ENCODE measurements at regions of chr16 and their contacts with region 1.

Region 1: GRCh38 chr16:69709456-69710084 is 16.8 kb downstream of the NQO1 start:
- DNase-seq: peak in 4 of 14 experiments; percentile 5 to 78 (median 76)
- ATAC-seq: peak; percentile 41
- H3K4me3 ChIP-seq: no peak overlapping the region
- H3K4me3 Mint-ChIP-seq: no peak overlapping the region
- H3K27ac ChIP-seq: no peak overlapping the region
- H3K27ac Mint-ChIP-seq: peak overlapping the region; percentile 10
- H3K4me1 ChIP-seq: no peaks in the 10 kb centered on the region
- H3K4me1 Mint-ChIP-seq: peaks cover 4% of the 10 kb centered on the region
- H3K27me3 ChIP-seq: no peaks in the 10 kb centered on the region
- H3K27me3 Mint-ChIP-seq: no peaks in the 10 kb centered on the region
- CTCF ChIP-seq: peak; percentile 76

Region 2: GRCh38 chr16:69691980-69692911 is 17.3 kb before region 1 on chr16:
- CTCF ChIA-PET with region 1: no interaction called
- POLR2A ChIA-PET with region 1: no interaction called
- intact Hi-C with region 1: no loop called
- DNase-seq: no peak
- ATAC-seq: no peak
- H3K4me3 ChIP-seq: no peak overlapping the region
- H3K4me3 Mint-ChIP-seq: no peak overlapping the region
- H3K27ac ChIP-seq: no peak overlapping the region
- H3K27ac Mint-ChIP-seq: no peak overlapping the region
- H3K4me1 ChIP-seq: no peaks in the 10 kb centered on the region
- H3K4me1 Mint-ChIP-seq: no peaks in the 10 kb centered on the region
- H3K27me3 ChIP-seq: no peaks in the 10 kb centered on the region
- H3K27me3 Mint-ChIP-seq: no peaks in the 10 kb centered on the region
- CTCF ChIP-seq: no peak

Region 3: GRCh38 chr16:69754469-69755310 is 45.1 kb after region 1 on chr16 and contains the start of gene NOB1:
- CTCF ChIA-PET with region 1: interaction called, 19 read pairs
- POLR2A ChIA-PET with region 1: interaction called, 22 read pairs
- intact Hi-C with region 1: loop called (anchors 1 kb)
- DNase-seq: peak; percentile 92 to 100 (median 97)
- ATAC-seq: peak; percentile 96
- H3K4me3 ChIP-seq: peak within 1 kb of the TSS; percentile 100
- H3K4me3 Mint-ChIP-seq: peak within 1 kb of the TSS; percentile 100
- H3K27ac ChIP-seq: peak within 1 kb of the TSS; percentile 71 to 78
- H3K27ac Mint-ChIP-seq: peak within 1 kb of the TSS; percentile 89
- H3K4me1 ChIP-seq: peaks cover 24% of the 10 kb centered on the region
- H3K4me1 Mint-ChIP-seq: peaks cover 34% of the 10 kb centered on the region
- H3K27me3 ChIP-seq: no peaks in the 10 kb centered on the region
- H3K27me3 Mint-ChIP-seq: no peaks in the 10 kb centered on the region
- CTCF ChIP-seq: peak; percentile 88
- total RNA-seq, gene NOB1: 31.0 to 33.9 TPM

Region 4: GRCh38 chr16:69930117-69930776 is 220.7 kb after region 1 on chr16:
- CTCF ChIA-PET with region 1: no interaction called
- POLR2A ChIA-PET with region 1: no interaction called
- intact Hi-C with region 1: loop called (anchors 2 kb)
- DNase-seq: peak in 12 of 14 experiments; percentile 1 to 71 (median 34)
- ATAC-seq: peak; percentile 67
- H3K4me3 ChIP-seq: no peak overlapping the region
- H3K4me3 Mint-ChIP-seq: no peak overlapping the region
- H3K27ac ChIP-seq: no peak overlapping the region
- H3K27ac Mint-ChIP-seq: no peak overlapping the region
- H3K4me1 ChIP-seq: no peaks in the 10 kb centered on the region
- H3K4me1 Mint-ChIP-seq: no peaks in the 10 kb centered on the region
- H3K27me3 ChIP-seq: no peaks in the 10 kb centered on the region
- H3K27me3 Mint-ChIP-seq: no peaks in the 10 kb centered on the region
- CTCF ChIP-seq: peak; percentile 80